ENCODE measurements at regions of chr12 and their contacts with region 1.

Region 1: DNA sequence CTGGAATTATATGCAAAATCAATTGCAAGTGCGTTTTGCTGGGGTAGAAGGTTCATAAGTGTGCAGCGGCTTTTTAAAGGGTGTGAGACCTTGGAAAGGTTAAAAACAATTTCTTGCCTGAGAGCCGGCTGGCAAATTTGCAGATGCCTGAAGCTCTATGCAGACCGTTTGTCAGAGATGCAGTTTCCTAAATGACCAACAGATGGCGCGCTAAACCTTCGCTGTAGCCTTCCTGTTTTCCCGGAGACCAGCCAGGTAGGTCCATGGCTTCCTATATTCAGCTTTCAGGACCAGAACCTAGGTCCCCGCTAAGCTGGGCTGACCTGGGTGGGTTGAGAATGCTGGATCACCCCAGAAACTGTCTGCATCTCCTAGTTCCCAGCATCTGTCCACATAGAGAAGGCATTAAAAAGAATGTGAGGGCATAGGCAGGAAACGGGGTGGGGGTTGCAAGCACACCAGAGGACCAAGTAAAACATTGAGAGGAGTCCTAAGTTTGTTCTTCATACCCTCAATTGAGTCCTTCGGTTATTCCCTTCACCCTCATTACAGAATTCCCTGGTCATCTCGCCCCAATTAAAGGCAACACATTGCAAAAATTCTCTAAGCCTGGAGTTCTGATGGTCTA is 5.7 kb upstream of the NOS1 start:
- DNase-seq: peak; percentile 79
- H3K4me3 Mint-ChIP-seq: no peak overlapping the region
- H3K27ac Mint-ChIP-seq: no peak overlapping the region
- H3K4me1 Mint-ChIP-seq: peaks cover 7% of the 10 kb centered on the region
- H3K27me3 Mint-ChIP-seq: peaks cover 26% of the 10 kb centered on the region
- CTCF ChIP-seq: peak; percentile 81

Region 2: DNA sequence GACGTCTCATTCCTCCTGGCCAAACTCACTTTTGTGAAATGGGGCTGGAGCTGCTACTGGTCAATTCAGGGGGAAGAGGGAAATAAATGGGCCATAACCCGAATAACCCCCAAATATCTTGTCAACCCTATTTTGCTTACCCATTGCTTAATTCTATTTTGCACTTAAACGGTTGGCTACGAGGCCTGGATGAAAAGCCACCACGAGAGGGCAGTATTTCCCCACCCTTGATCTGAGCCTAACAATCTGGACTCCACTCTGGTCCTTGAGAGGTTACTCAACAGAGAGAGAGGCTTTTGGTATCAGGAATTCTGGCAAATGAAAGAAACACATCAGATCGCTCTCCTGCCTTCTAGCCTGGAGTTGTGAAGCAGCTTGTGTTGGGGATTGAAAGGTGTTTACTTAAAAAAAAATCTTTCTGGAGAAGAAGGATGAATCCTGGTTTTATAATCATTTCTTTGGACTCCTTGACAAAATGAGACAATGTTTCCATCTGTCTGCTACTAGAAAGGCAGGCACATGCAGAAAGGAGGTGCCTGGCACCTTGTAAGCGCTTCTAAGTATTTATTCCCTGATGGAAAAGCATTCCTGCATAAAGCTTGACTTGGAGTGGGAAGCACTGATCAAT is 154.4 kb before region 1 on chr12:
- CTCF ChIA-PET with region 1: interaction called, 15 read pairs
- POLR2A ChIA-PET with region 1: no interaction called
- intact Hi-C with region 1: loop called (anchors 1 kb)
- DNase-seq: peak; percentile 86
- H3K4me3 Mint-ChIP-seq: no peak overlapping the region
- H3K27ac Mint-ChIP-seq: no peak overlapping the region
- H3K4me1 Mint-ChIP-seq: no peaks in the 10 kb centered on the region
- H3K27me3 Mint-ChIP-seq: peaks cover 70% of the 10 kb centered on the region
- CTCF ChIP-seq: peak; percentile 82

Region 3: GRCh38 chr12:117347588-117347987 is 19.5 kb before region 1 on chr12:
- CTCF ChIA-PET with region 1: interaction called, 16 read pairs
- POLR2A ChIA-PET with region 1: interaction called, 4 read pairs
- intact Hi-C with region 1: no loop called
- DNase-seq: peak; percentile 51
- H3K4me3 Mint-ChIP-seq: no peak overlapping the region
- H3K27ac Mint-ChIP-seq: no peak overlapping the region
- H3K4me1 Mint-ChIP-seq: peaks cover 5% of the 10 kb centered on the region
- H3K27me3 Mint-ChIP-seq: no peaks in the 10 kb centered on the region
- CTCF ChIP-seq: no peak

Region 4: GRCh38 chr12:117580718-117581062 is 213.6 kb after region 1 on chr12:
- CTCF ChIA-PET with region 1: interaction called, 128 read pairs
- POLR2A ChIA-PET with region 1: no interaction called
- intact Hi-C with region 1: no loop called
- DNase-seq: peak; percentile 60
- H3K4me3 Mint-ChIP-seq: no peak overlapping the region
- H3K27ac Mint-ChIP-seq: no peak overlapping the region
- H3K4me1 Mint-ChIP-seq: no peaks in the 10 kb centered on the region
- H3K27me3 Mint-ChIP-seq: peaks cover 15% of the 10 kb centered on the region
- CTCF ChIP-seq: no peak

Region 5: DNA sequence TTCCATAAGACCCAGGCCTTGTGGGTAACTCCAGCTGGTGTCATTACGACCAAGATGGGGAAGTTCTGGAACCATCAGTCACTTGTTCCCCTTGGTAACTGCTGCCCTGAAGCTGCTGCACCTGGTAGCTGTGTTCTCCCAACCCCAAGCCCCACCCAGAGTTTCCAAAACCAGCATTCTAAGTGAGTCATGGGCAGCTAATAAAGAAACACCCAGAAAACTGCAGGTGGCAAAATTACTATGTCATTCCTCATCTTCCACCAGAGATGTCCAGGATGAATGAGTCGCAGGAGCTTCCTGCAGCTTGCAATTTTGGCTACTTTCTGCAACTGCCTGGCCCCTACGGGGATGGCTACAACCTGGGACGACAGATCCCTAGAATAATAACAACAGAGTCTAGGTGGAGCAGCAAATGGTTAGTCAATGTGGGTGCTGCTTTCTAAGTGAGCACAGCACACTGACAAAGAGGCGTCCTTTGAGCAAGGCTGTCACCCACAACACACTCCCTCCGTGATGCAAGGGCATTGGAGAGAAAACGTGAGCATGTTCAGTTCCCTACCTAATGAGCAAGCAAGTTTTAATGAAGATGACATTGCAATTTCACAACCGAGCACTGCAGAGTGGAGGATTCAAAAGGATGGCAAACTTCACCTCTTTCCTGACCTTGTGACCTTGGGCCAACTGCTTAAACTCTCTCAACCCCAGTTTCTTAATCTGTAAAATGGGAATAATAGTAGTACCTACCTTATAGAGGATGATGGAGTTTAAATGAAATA is 295.7 kb after region 1 on chr12:
- CTCF ChIA-PET with region 1: interaction called, 11 read pairs
- POLR2A ChIA-PET with region 1: no interaction called
- intact Hi-C with region 1: no loop called
- DNase-seq: peak; percentile 35
- H3K4me3 Mint-ChIP-seq: no peak overlapping the region
- H3K27ac Mint-ChIP-seq: no peak overlapping the region
- H3K4me1 Mint-ChIP-seq: peaks cover 17% of the 10 kb centered on the region
- H3K27me3 Mint-ChIP-seq: peaks cover 20% of the 10 kb centered on the region
- CTCF ChIP-seq: no peak

Region 6: GRCh38 chr12:117680312-117680711 is 313.2 kb after region 1 on chr12:
- CTCF ChIA-PET with region 1: interaction called, 12 read pairs
- POLR2A ChIA-PET with region 1: no interaction called
- intact Hi-C with region 1: no loop called
- DNase-seq: no peak
- H3K4me3 Mint-ChIP-seq: no peak overlapping the region
- H3K27ac Mint-ChIP-seq: peak overlapping the region; percentile 46
- H3K4me1 Mint-ChIP-seq: peaks cover 16% of the 10 kb centered on the region
- H3K27me3 Mint-ChIP-seq: no peaks in the 10 kb centered on the region
- CTCF ChIP-seq: no peak

Region 7: GRCh38 chr12:117857632-117858612 is 490.8 kb after region 1 on chr12:
- CTCF ChIA-PET with region 1: interaction called, 13 read pairs
- POLR2A ChIA-PET with region 1: no interaction called
- intact Hi-C with region 1: no loop called
- DNase-seq: peak; percentile 65
- H3K4me3 Mint-ChIP-seq: no peak overlapping the region
- H3K27ac Mint-ChIP-seq: no peak overlapping the region
- H3K4me1 Mint-ChIP-seq: no peaks in the 10 kb centered on the region
- H3K27me3 Mint-ChIP-seq: no peaks in the 10 kb centered on the region
- CTCF ChIP-seq: peak; percentile 38

Measured in MCF 10A (cell line).